ENCODE measurements at regions of chr3 and their contacts with region 1.

Region 1: DNA sequence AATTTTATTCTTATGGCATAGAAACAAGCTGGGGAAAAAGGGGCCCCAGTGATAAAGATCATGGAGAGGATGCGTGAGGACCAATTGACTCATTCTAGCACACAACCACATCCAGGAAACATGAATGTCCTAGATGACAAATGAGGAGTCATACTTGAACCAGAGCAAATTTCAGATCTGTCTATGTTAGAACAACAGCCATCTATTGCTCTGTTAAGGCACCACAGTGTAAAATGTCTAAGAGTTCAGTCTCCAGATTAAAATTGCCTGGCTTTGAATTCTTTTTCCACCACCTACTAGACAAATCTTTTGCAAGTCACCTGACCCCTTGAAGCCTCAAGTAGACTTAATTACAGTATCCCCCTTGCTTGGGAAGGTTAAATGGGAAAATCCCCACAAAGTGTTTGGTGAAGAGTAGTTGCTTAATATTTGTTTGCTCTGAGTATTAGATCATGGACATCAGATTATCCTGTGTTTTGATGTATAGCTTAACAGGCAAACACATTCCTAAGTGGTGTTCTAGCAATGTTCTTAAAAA is 258.7 kb upstream of the TGFBR2 start:
- DNase-seq: peak; percentile 93
- H3K4me3 ChIP-seq: no peak overlapping the region
- H3K27ac ChIP-seq: peak overlapping the region; percentile 92
- H3K4me1 ChIP-seq: peaks cover 78% of the 10 kb centered on the region
- H3K27me3 ChIP-seq: no peaks in the 10 kb centered on the region
- CTCF ChIP-seq: no peak

Region 2: DNA sequence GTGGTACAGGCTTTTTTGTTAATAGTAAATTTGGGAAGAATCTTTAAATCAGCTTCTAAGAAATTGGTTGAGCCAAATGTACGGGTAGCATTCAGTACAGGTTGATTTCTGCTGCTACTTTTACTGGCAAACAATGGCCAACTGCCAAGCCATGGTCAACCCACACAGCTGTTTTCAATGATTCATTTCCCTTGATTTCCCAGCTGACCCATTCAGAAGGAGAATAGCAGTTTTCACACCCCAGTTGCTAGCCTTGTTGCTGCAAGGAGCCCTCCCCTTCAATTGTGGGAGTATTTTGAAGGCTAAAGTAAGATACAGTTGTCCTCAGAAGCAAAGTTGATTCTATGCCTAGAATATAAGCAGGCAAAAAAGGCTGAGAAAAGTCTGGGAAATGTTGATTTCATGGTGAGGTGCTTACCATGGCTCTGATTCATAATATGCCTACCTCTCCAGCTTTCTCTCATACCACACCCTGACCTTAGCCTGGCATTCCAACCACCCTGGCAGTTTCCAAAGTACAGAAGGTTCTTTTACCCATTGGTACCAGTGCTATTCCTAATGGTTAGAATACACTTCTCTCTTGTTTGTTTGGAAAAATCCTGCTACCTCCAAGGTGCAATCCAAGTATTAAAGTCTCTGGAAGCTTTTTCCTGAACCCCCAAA is 61.6 kb before region 1 on chr3:
- CTCF ChIA-PET with region 1: no interaction called
- dilution Hi-C with region 1: no loop called
- in situ Hi-C with region 1: no loop called
- intact Hi-C with region 1: loop called (anchors 5 kb)
- DNase-seq: peak; percentile 93
- H3K4me3 ChIP-seq: no peak overlapping the region
- H3K27ac ChIP-seq: peak overlapping the region; percentile 87
- H3K4me1 ChIP-seq: peaks cover 60% of the 10 kb centered on the region
- H3K27me3 ChIP-seq: no peaks in the 10 kb centered on the region
- CTCF ChIP-seq: no peak

Region 3: GRCh38 chr3:30311781-30312180 is 36.0 kb before region 1 on chr3:
- CTCF ChIA-PET with region 1: no interaction called
- dilution Hi-C with region 1: no loop called
- in situ Hi-C with region 1: no loop called
- intact Hi-C with region 1: no loop called
- DNase-seq: no peak
- H3K4me3 ChIP-seq: no peak overlapping the region
- H3K27ac ChIP-seq: no peak overlapping the region
- H3K4me1 ChIP-seq: peaks cover 9% of the 10 kb centered on the region
- H3K27me3 ChIP-seq: no peaks in the 10 kb centered on the region
- CTCF ChIP-seq: no peak

Region 4: DNA sequence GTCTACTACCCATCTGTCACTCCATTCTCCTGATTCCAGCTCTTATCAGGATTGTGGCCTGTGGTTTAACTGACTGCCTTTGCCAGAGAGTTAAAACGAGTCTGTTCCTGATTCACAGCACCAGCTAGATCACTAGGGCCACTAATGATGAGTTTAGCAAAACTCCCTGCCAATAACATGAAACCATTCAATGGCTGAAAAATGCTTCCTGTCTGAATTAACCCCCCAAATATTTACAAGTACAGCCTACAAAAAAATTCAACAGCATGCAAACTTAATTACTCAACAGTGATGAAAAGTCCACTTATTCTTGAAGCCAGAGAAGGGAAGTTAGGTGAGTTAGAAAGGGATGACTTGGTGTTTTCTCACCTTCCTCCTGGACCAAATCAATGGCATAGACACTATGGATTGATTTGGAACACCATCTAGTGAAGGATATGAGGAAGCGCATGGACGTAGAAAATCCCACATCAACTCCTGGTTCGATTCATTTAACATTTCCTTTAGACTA is 400.1 kb after region 1 on chr3:
- CTCF ChIA-PET with region 1: no interaction called
- dilution Hi-C with region 1: no loop called
- in situ Hi-C with region 1: no loop called
- intact Hi-C with region 1: no loop called
- DNase-seq: peak; percentile 74
- H3K4me3 ChIP-seq: no peak overlapping the region
- H3K27ac ChIP-seq: no peak overlapping the region
- H3K4me1 ChIP-seq: peaks cover 28% of the 10 kb centered on the region
- H3K27me3 ChIP-seq: no peaks in the 10 kb centered on the region
- CTCF ChIP-seq: peak; percentile 56 to 62

Measured in mammary epithelial cell (primary cell).